Left cardiac atrium (tissue), 4 donors: ENCODE measurements at regions of chr9 and their contacts with region 1.

Region 1: GRCh38 chr9:128947422-128948301 is at the starts of genes DOLK and NUP188:
- DNase-seq: peak; percentile 97
- ATAC-seq: peak; percentile 92
- total RNA-seq, gene DOLK: 9.3 to 11.3 TPM
- total RNA-seq, gene NUP188: 14.8 to 30.0 TPM

Region 2: GRCh38 chr9:128723352-128723865 is 224.3 kb before region 1 on chr9:
- intact Hi-C with region 1: no loop called
- DNase-seq: no peak
- ATAC-seq: no peak

Region 3: DNA sequence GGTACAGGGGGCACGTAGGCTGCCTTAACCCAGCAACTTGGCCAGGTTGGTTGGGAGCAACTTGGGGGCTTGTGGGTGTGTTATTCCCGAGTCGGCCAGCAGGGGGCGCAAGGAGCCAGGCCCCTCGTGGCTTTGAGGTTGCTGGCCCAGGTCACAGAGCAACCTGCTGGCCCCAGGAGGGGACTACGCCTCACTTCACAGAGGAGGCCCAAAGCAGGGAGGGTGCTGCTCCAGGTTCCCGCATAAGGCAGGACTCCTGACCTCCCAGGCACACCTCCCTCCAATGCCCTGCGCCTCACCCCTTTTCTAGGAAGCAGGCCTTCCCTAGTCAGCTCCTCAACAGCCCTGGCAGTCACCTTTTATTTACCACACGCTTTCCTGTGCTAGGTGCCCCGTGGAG is 84.0 kb before region 1 on chr9:
- intact Hi-C with region 1: loop called in 1 of 2 experiments (anchors 5 kb)
- DNase-seq: peak; percentile 75
- ATAC-seq: peak; percentile 80 to 87

Region 4: GRCh38 chr9:129160712-129161533 is 213.3 kb after region 1 on chr9:
- intact Hi-C with region 1: no loop called
- DNase-seq: no peak
- ATAC-seq: no peak